A673 (cell line): ENCODE measurements at regions of chr16 and their contacts with region 1.

Region 1: DNA sequence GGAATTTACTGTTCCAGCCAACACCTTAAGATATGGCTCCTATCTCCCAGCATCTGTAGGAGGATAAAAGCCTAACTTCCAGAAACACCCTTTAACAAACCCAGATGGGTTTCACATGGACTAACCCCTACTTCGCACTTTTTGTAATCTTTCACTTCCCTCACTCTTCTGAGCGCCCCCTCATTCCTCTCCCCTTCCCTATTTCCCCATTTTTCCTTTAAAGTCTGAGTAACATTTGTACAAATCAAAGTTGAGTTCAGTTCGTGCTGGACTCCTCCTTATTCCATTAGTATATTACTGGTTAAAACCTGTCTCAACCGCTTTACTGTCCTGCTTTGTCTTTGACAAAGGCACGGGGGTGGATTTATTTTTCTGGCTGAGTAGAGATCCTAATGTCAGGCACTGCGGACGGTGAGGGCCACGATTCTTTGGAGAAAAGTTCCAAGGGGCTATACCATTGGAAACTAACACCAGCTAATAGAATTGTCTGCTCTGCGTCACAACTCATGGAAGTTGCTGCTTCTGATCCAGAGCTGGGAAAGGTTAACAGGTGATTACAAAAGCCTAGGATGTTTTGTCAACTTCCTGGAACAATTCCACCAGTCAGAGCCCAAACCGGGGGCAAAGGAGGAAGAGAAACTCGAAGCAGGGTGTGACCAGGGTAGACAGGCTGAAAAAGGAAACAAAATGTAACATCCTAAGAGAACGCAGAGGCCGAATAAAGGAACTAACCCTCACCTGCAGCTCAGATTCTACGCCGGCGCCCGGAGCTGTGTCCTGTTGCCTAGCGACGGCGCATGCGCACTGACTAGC is 12.5 kb downstream of the TAT start:
- DNase-seq: no peak
- H3K4me3 ChIP-seq: peak overlapping the region; percentile 55
- H3K27ac ChIP-seq: no peak overlapping the region
- H3K4me1 ChIP-seq: peaks cover 10% of the 10 kb centered on the region
- H3K27me3 ChIP-seq: no peaks in the 10 kb centered on the region
- CTCF ChIP-seq: no peak

Region 2: GRCh38 chr16:71645453-71645852 is 81.1 kb after region 1 on chr16:
- CTCF ChIA-PET with region 1: no interaction called
- POLR2A ChIA-PET with region 1: no interaction called
- intact Hi-C with region 1: loop called (anchors 5 kb)
- DNase-seq: peak; percentile 65
- H3K4me3 ChIP-seq: no peak overlapping the region
- H3K27ac ChIP-seq: no peak overlapping the region
- H3K4me1 ChIP-seq: no peaks in the 10 kb centered on the region
- H3K27me3 ChIP-seq: no peaks in the 10 kb centered on the region
- CTCF ChIP-seq: peak; percentile 78

Region 3: GRCh38 chr16:71894921-71895678 is 330.7 kb after region 1 on chr16 and contains the start of gene IST1:
- CTCF ChIA-PET with region 1: no interaction called
- POLR2A ChIA-PET with region 1: no interaction called
- intact Hi-C with region 1: no loop called
- DNase-seq: peak; percentile 99
- H3K4me3 ChIP-seq: peak within 1 kb of the TSS; percentile 78
- H3K27ac ChIP-seq: peak within 1 kb of the TSS; percentile 95
- H3K4me1 ChIP-seq: peaks cover 8% of the 10 kb centered on the region
- H3K27me3 ChIP-seq: no peaks in the 10 kb centered on the region
- CTCF ChIP-seq: no peak
- total RNA-seq, gene IST1: 206 TPM in 2 replicates